Lower lobe of right lung (tissue), 2 donors: ENCODE measurements at regions of chr10 and their contacts with region 1.

Region 1: GRCh38 chr10:76026905-76027304 is 595.5 kb downstream of the LRMDA start:
- DNase-seq: no peak
- ATAC-seq: peak; percentile 50 to 60
- H3K4me3 ChIP-seq: no peak overlapping the region
- H3K27ac ChIP-seq: no peak overlapping the region
- H3K4me1 ChIP-seq: no peaks in the 10 kb centered on the region
- H3K27me3 ChIP-seq: no peaks in the 10 kb centered on the region
- CTCF ChIP-seq: no peak

Region 2: GRCh38 chr10:75408911-75409885 is 617.7 kb before region 1 on chr10:
- intact Hi-C with region 1: loop called (anchors 5 kb)
- DNase-seq: peak; percentile 87
- ATAC-seq: peak; percentile 89 to 92
- H3K4me3 ChIP-seq: peak overlapping the region; percentile 93
- H3K27ac ChIP-seq: peak overlapping the region; percentile 97
- H3K4me1 ChIP-seq: peaks cover 13% of the 10 kb centered on the region
- H3K27me3 ChIP-seq: peaks cover 9% of the 10 kb centered on the region
- CTCF ChIP-seq: no peak

Region 3: DNA sequence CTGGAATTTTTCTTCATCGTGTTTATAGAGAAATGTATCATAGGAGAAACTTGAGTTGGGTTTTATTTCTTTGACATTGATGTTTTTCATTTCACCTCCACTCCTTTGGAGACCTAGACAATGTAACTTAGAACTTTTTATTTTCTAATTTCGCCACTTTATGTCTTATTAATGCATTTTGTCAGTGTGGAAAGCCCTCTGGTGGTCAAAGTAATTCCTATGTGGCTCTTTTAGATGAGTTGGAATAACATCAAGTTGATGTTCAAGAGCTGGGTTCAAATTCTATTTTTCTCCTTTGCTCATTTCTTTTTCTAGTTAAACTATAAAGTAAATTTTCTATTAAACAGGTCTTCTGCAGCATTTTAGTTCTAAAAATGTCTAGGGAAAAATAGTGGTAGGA is 116.9 kb before region 1 on chr10:
- intact Hi-C with region 1: no loop called
- DNase-seq: no peak
- ATAC-seq: no peak
- H3K4me3 ChIP-seq: no peak overlapping the region
- H3K27ac ChIP-seq: no peak overlapping the region
- H3K4me1 ChIP-seq: no peaks in the 10 kb centered on the region
- H3K27me3 ChIP-seq: no peaks in the 10 kb centered on the region
- CTCF ChIP-seq: peak; percentile 51